ENCODE measurements at regions of chr3 and their contacts with region 1.

Region 1: DNA sequence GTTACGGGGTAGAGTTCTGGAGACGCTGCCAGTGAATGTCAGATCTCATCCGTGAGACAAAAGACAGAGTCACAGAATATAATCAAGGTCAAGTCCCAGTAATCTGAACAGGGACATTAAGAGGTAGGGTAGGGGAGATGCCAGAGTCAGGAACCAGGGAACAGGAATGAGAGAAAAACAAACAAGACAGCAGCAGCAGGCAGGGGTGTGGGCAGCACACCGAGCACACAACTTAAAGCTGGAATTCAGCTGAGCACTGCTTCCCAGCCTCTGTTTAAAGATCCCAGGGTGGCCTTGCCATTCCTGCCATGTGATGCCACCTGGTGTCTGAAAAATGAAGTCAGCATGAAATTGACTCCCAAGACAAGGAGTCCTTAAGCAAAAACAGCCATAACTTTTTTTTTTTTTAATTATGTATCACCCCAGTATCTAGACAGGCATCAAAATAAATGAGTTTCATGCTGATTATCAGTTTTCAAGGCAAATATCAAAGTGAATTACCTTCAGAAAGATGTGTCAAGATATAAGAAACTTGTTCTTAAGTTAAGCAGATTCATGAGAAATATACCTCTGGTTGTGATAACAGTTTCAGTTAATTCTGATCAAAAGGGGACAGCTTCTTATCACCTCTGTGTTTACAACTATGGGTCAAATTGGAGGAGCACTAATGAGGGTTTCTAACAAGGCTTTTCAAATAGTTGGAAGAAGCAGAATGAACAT is 203.7 kb downstream of the SLC9A9 start:
- DNase-seq: peak; percentile 74
- ATAC-seq: peak; percentile 93
- H3K4me3 ChIP-seq: no peak overlapping the region
- H3K27ac ChIP-seq: no peak overlapping the region
- H3K4me1 ChIP-seq: peaks cover 3% of the 10 kb centered on the region; the same call in 1 of the 2 replicates
- H3K27me3 ChIP-seq: no peaks in the 10 kb centered on the region
- CTCF ChIP-seq: peak; percentile 73

Region 2: GRCh38 chr3:143121241-143122088 is 523.1 kb before region 1 on chr3:
- CTCF ChIA-PET with region 1: no interaction called
- POLR2A ChIA-PET with region 1: no interaction called
- intact Hi-C with region 1: loop called (anchors 1 kb)
- DNase-seq: peak; percentile 44
- ATAC-seq: no peak
- H3K4me3 ChIP-seq: peak overlapping the region; percentile 97
- H3K27ac ChIP-seq: no peak overlapping the region
- H3K4me1 ChIP-seq: peaks cover 11% of the 10 kb centered on the region
- H3K27me3 ChIP-seq: no peaks in the 10 kb centered on the region
- CTCF ChIP-seq: peak; percentile 56

Region 3: GRCh38 chr3:143329567-143330211 is 314.8 kb before region 1 on chr3:
- CTCF ChIA-PET with region 1: interaction called, 4 read pairs
- POLR2A ChIA-PET with region 1: no interaction called
- intact Hi-C with region 1: loop called (anchors 2 kb)
- DNase-seq: no peak
- ATAC-seq: no peak
- H3K4me3 ChIP-seq: no peak overlapping the region
- H3K27ac ChIP-seq: no peak overlapping the region
- H3K4me1 ChIP-seq: peaks cover 33% of the 10 kb centered on the region
- H3K27me3 ChIP-seq: no peaks in the 10 kb centered on the region
- CTCF ChIP-seq: no peak

Region 4: DNA sequence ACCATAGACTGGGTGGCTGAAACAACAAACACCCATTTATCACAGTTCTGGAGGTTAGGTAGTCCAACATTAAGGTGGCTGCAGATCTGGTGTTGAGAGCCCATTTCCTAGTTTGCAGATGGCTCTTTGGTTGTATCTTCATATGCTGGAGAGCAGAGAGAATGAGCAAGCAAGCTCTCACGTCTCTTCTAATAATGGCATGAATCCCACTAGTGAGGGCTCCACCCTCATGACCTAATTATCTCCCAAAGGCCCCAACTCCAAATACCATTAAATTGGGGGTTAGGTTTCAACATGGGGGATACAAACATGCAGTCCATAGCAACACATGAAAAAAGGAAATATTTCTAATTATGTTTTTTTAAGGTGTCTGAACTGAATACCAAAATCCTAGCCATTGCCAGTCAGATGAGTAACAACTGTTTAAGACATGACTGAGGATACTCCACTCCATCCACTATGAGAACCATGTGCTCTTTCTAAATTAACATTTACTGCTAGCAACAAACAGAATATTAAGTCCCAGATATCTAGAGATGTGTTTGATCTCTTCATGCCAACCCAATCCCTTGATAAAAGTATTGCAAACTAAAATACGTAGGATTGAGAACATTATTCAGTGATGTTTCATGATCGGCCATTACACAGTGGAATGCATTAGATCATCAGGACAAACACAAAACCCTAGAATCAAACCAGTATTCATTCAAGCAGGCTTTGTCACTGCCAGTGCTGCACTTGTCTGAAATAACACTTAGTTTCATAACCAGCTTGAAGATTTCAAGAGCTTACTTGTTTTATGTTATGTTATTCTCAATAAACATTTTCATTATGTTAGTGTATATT is 136.6 kb before region 1 on chr3:
- CTCF ChIA-PET with region 1: no interaction called
- POLR2A ChIA-PET with region 1: no interaction called
- intact Hi-C with region 1: loop called (anchors 10 kb)
- DNase-seq: peak; percentile 43
- ATAC-seq: peak; percentile 55
- H3K4me3 ChIP-seq: no peak overlapping the region
- H3K27ac ChIP-seq: no peak overlapping the region
- H3K4me1 ChIP-seq: no peaks in the 10 kb centered on the region; the same call in 1 of the 2 replicates
- H3K27me3 ChIP-seq: no peaks in the 10 kb centered on the region
- CTCF ChIP-seq: no peak